Heart right ventricle (tissue), 16 donors: ENCODE measurements at regions of chr6 and their contacts with region 1.

Region 1: DNA sequence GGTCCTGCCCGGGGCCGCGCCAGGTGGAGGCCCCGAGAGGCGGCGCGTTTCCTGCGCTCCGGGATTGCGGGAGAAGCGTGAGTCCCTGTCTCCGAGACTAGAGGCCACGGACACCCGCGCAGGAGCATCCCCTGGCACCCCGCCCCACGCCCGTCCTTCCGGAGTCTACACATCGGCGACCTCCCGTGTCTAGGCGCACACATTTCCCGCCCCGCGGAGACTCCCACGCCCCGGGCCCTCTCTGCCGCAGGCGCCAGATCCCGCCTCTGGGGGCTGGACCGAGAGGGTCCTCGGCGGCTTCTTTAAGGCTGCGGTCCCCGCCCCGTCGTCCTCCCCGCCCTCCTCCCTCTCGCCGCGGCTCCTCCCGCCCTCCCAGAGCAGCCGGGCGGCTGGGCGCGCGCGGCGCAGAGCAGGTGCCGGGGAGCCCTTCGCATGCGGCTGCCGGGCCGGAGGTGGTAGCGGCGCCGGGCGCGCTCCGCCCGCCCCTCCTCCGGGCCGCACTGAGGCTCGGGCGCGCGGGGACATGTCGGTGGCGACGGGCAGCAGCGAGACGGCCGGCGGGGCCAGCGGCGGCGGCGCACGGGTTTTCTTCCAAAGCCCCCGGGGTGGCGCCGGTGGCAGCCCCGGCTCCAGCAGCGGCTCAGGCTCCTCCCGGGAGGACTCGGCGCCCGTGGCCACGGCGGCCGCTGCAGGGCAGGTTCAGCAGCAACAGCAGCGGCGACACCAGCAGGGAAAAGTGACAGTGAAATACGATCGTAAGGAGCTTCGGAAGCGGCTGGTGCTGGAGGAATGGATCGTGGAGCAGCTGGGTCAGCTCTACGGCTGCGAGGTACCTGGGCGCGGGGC is at the start of gene PPP1R14C:
- DNase-seq: peak; percentile 20 to 50
- ATAC-seq: peak; percentile 72 to 90 (median 80)
- H3K4me3 ChIP-seq: peak within 1 kb of the TSS; percentile 16 to 71 (median 62)
- H3K27ac ChIP-seq: peak within 1 kb of the TSS; percentile 26 to 83 (median 70)
- H3K4me1 ChIP-seq: peaks cover 0 to 35% (median 17%) of the 10 kb centered on the region in 9 donors
- H3K27me3 ChIP-seq: peaks cover 0 to 89% (median 67%) of the 10 kb centered on the region in 7 donors
- CTCF ChIP-seq: no peak
- total RNA-seq, gene PPP1R14C: 75.9 to 145 (median 95.6) TPM

Region 2: GRCh38 chr6:150116200-150116800 is 26.6 kb before region 1 on chr6:
- intact Hi-C with region 1: no loop called
- DNase-seq: no peak
- ATAC-seq: peak in 1 of 8 donors; percentile 25
- H3K4me3 ChIP-seq: no peak overlapping the region
- H3K27ac ChIP-seq: no peak overlapping the region
- H3K4me1 ChIP-seq: peaks cover 0 to 14% (median 6%) of the 10 kb centered on the region in 9 donors
- H3K27me3 ChIP-seq: peaks cover 0 to 3% (median 0%) of the 10 kb centered on the region in 7 donors
- CTCF ChIP-seq: no peak

Region 3: GRCh38 chr6:150177952-150178520 is 35.1 kb after region 1 on chr6:
- intact Hi-C with region 1: loop called in 2 of 10 experiments (anchors 2 kb)
- DNase-seq: peak in 1 of 2 donors; percentile 44
- ATAC-seq: peak; percentile 32 to 80 (median 58)
- H3K4me3 ChIP-seq: no peak overlapping the region
- H3K27ac ChIP-seq: peak overlapping the region; percentile 75 to 96 (median 86)
- H3K4me1 ChIP-seq: peaks cover under 1 to 64% (median 20%) of the 10 kb centered on the region in 9 donors
- H3K27me3 ChIP-seq: no peaks in the 10 kb centered on the region
- CTCF ChIP-seq: no peak

Region 4: DNA sequence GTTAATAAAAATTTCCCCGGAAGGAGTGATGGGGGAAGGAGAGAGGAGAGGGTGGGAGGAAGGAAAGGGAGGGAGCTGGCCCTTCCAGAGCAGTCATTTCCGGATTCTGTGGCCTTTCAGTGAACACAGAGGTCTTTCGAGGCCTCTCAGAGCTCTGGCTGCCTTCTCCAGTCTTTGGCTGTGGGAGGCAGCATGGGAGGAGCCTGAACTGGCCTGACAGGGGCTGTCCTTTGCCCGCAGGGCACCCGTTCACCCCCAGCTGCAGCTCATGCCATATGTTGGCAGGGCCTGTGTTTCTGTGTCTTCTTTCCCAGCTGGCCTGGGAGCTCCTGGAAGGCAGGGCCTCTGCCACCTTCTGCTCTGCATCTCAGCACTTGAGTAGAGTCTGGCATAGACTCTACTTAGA is 95.4 kb after region 1 on chr6:
- intact Hi-C with region 1: loop called in 4 of 10 experiments (anchors 5 to 10 kb)
- DNase-seq: peak; percentile 59
- ATAC-seq: peak; percentile 75 to 97 (median 90)
- H3K4me3 ChIP-seq: no peak overlapping the region
- H3K27ac ChIP-seq: peak overlapping the region in 7 of 10 donors; percentile 25 to 73 (median 44)
- H3K4me1 ChIP-seq: peaks cover 3 to 35% (median 20%) of the 10 kb centered on the region in 9 donors
- H3K27me3 ChIP-seq: peaks cover 0 to 17% (median 0%) of the 10 kb centered on the region in 7 donors
- CTCF ChIP-seq: no peak

Region 5: DNA sequence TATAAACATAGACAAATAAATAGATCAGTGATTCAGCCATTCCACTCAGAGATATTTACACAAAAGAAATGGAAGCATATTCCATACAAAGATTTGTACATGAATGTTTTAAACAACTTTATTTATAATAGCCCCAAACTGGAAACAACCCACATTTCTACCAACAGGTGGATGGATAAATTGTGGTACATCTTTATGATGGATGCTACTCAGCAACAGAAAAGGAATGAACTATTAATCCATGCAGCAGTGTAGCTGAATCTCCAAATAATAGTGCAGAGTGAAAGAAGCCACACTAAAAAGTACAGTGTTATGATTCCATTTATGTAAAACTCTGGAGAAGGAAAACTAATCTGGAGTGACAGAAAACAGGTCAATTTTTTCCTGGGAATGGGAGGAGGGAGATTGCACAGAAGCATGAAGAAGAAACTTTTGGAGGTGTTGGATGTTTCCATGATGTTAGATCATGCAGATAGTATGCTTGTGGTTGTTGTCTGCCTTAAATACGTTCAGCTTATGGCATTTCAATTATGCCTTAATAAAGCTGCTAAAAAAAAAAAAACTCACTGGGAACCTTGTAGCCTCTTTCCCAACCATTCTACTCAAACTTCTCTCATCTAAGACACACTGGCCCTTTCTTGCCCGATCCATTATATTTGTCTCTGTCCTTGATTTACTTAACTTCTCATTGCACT is 100.9 kb after region 1 on chr6:
- intact Hi-C with region 1: loop called in 4 of 10 experiments (anchors 5 to 10 kb)
- DNase-seq: no peak
- ATAC-seq: no peak
- H3K4me3 ChIP-seq: no peak overlapping the region
- H3K27ac ChIP-seq: no peak overlapping the region
- H3K4me1 ChIP-seq: peaks cover 0 to 8% (median 0%) of the 10 kb centered on the region in 9 donors
- H3K27me3 ChIP-seq: peaks cover 0 to 17% (median 0%) of the 10 kb centered on the region in 7 donors
- CTCF ChIP-seq: no peak

Region 6: DNA sequence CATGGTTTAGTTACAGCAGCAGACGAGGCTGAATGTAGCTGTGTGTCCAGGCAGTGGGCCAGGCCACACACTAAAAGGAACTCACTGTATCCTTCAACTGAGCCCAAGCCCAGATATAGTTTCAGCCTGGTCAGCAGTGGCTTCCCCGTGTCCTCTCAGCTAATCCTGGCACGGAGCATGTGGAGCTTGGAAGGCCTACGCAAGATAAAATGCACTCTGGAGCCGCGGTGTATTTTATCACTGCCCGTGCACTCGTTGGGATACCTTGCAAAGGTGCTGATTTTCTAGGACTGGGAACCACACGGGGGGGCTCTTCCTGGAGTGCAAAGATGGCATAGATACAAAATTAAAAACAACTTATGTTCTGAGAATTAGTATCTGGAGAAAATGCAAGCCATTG is 177.5 kb after region 1 on chr6:
- intact Hi-C with region 1: loop called in 2 of 10 experiments (anchors 5 to 10 kb)
- DNase-seq: peak; percentile 59 to 79
- ATAC-seq: peak; percentile 88 to 98 (median 94)
- H3K4me3 ChIP-seq: no peak overlapping the region
- H3K27ac ChIP-seq: peak overlapping the region in 4 of 10 donors; percentile 4 to 34 (median 30)
- H3K4me1 ChIP-seq: peaks cover 0 to 46% (median 27%) of the 10 kb centered on the region in 9 donors
- H3K27me3 ChIP-seq: no peaks in the 10 kb centered on the region
- CTCF ChIP-seq: no peak

Region 7: GRCh38 chr6:150334790-150335783 is 192.2 kb after region 1 on chr6:
- intact Hi-C with region 1: loop called in 1 of 10 experiments (anchors 5 kb)
- DNase-seq: peak in 1 of 2 donors; percentile 51
- ATAC-seq: peak in 3 of 8 donors; percentile 33 to 59 (median 37)
- H3K4me3 ChIP-seq: no peak overlapping the region
- H3K27ac ChIP-seq: no peak overlapping the region
- H3K4me1 ChIP-seq: no peaks in the 10 kb centered on the region
- H3K27me3 ChIP-seq: peaks cover 0 to 4% (median 0%) of the 10 kb centered on the region in 7 donors
- CTCF ChIP-seq: peak; percentile 57 to 91 (median 86)